ENCODE measurements at regions of chr7 and their contacts with region 1.

Region 1: DNA sequence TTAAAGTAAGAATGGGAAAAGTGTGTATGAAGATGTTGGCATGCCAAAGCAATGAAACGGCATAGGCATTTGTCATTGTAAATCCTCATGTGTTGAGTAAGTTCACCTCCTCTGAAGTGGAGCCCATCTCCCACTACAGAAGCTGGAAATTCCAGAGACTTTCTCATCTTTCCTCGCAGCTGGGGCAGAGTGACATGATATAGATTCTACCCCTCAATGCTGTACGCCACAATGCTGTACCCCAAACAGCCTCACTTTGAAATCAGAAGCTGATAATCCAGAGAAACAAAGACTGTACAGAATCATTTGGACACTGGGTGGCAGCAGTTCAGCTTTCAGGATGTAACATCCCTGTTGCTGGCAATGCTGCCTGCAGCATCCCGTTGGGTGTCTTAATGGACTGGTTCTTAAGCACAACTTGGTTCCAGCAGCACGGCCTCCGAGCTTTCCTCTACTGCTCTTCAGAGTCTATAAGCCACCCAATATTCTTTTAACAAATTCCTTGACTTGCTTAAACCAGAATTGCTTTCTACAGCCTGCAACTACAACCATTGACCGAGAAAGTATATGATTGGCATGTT is 18.8 kb downstream of the ZC3HAV1L start:
- DNase-seq: peak; percentile 81 to 87 (median 84)
- ATAC-seq: peak; percentile 97
- H3K4me3 ChIP-seq: no peak overlapping the region
- H3K27ac ChIP-seq: no peak overlapping the region
- H3K4me1 ChIP-seq: no peaks in the 10 kb centered on the region
- H3K27me3 ChIP-seq: peaks cover 25 to 27% of the 10 kb centered on the region in 2 experiments
- CTCF ChIP-seq: peak; percentile 88 to 97 (median 91)
- EP300 ChIP-seq: no peak
- POLR2A ChIP-seq: no peak
- RAD21 ChIP-seq: peak; percentile 93 to 98

Region 2: GRCh38 chr7:138886501-138886917 is 130.5 kb before region 1 on chr7:
- CTCF ChIA-PET with region 1: no interaction called
- POLR2A ChIA-PET with region 1: no interaction called
- in situ Hi-C with region 1: no loop called
- intact Hi-C with region 1: loop called (anchors 10 kb)
- DNase-seq: peak; percentile 64 to 74 (median 68)
- ATAC-seq: peak; percentile 82
- H3K4me3 ChIP-seq: no peak overlapping the region
- H3K27ac ChIP-seq: no peak overlapping the region
- H3K4me1 ChIP-seq: no peaks in the 10 kb centered on the region
- H3K27me3 ChIP-seq: peaks cover 52 to 61% of the 10 kb centered on the region in 2 experiments
- CTCF ChIP-seq: peak; percentile 63 to 93 (median 80); a peak in 5 of 6 replicates
- EP300 ChIP-seq: no peak
- POLR2A ChIP-seq: no peak
- RAD21 ChIP-seq: peak; percentile 69 to 82

Region 3: DNA sequence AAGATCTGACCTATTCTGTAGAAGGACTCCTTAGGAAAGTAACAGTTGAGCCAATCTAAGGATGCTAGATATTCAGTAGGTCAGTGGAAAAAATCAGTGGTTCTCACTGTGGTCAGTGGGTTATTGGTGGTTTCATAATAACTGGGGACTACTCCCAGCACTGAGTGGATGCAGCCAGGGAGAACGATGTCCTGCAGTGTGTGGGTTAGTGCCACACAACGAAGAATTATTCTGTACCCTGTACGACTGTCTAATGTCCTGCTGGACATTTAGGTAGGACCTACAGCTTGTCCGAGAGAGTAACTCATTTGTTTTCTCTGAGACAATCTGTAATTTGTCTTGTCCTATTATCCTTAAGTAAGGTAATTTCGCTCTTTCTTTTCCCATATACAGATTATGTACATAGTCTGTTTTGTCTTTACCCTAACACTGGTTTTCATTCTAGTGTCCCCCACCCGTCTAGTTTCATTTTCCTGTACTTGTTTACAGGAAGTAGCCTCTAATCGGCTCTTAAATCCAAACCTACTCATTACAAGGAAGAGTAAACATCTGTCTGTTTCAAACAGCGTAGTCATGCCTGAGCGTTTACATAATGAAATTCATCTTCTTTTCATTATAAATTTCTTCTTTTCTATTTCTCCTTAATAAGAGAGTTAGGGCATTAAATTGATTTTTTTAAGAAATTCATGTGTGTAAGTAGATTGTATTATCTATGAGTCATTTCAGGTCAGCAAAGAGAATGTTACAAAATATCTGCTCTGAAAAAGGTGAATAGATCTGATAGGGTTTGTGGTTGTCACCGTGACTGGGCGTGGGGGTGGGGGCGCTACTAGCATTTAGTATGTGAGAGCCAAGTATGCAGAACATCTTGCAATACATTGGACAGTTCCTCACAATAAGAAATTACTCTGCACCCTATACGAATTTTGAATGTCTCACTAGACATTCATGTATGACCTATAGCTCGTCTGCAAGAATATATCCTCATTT is 27.1 kb after region 1 on chr7:
- CTCF ChIA-PET with region 1: no interaction called
- POLR2A ChIA-PET with region 1: interaction called, 4 read pairs
- in situ Hi-C with region 1: no loop called
- intact Hi-C with region 1: loop called (anchors 2 kb)
- DNase-seq: peak; percentile 84 to 92 (median 88)
- ATAC-seq: peak; percentile 93
- H3K4me3 ChIP-seq: no peak overlapping the region
- H3K27ac ChIP-seq: peak overlapping the region; percentile 60
- H3K4me1 ChIP-seq: peaks cover 7 to 27% of the 10 kb centered on the region in 2 experiments
- H3K27me3 ChIP-seq: no peaks in the 10 kb centered on the region
- CTCF ChIP-seq: peak in 2 of 3 experiments; percentile 17 to 44; a peak in 3 of 6 replicates
- EP300 ChIP-seq: peak; percentile 97
- POLR2A ChIP-seq: no peak
- RAD21 ChIP-seq: peak; percentile 5 to 28; a peak in 2 of 4 replicates

Region 4: DNA sequence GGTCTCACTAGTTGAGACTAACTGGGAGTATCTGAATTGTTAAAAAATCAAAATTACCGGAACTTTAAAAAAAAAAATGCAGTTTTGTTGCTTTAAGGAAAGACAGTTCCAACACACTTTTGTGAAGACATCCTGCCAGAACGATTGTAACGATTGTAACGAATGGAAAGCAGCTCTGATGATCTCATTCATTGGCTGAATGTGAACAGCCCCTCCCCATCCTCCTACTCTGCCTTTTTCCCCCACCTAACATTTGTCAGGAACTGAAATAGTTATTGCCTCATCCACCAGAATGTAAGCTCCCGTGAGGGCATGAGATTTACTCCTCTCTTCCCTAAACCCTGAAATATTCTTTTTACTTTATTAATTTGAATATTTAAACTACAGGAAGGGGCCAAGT is 41.9 kb after region 1 on chr7:
- CTCF ChIA-PET with region 1: no interaction called
- POLR2A ChIA-PET with region 1: interaction called, 3 read pairs
- in situ Hi-C with region 1: no loop called
- intact Hi-C with region 1: loop called (anchors 5 kb)
- DNase-seq: no peak
- ATAC-seq: no peak
- H3K4me3 ChIP-seq: no peak overlapping the region
- H3K27ac ChIP-seq: no peak overlapping the region
- H3K4me1 ChIP-seq: peaks cover 0 to 3% of the 10 kb centered on the region in 2 experiments; a peak in 1 of 5 replicates
- H3K27me3 ChIP-seq: no peaks in the 10 kb centered on the region
- CTCF ChIP-seq: no peak
- EP300 ChIP-seq: no peak
- POLR2A ChIP-seq: no peak
- RAD21 ChIP-seq: no peak